BJ (cell line): ENCODE measurements at regions of chr3 and their contacts with region 1.

Region 1: GRCh38 chr3:48151058-48151806 is 37.0 kb downstream of the CDC25A start:
- DNase-seq: no peak
- H3K4me3 ChIP-seq: no peak overlapping the region
- H3K27me3 ChIP-seq: no peaks in the 10 kb centered on the region
- CTCF ChIP-seq: peak; percentile 85

Region 2: GRCh38 chr3:47836986-47837385 is 314.2 kb before region 1 on chr3:
- CTCF ChIA-PET with region 1: interaction called, 35 read pairs
- POLR2A ChIA-PET with region 1: no interaction called
- DNase-seq: no peak
- H3K4me3 ChIP-seq: no peak overlapping the region
- H3K27me3 ChIP-seq: no peaks in the 10 kb centered on the region
- CTCF ChIP-seq: no peak

Region 3: DNA sequence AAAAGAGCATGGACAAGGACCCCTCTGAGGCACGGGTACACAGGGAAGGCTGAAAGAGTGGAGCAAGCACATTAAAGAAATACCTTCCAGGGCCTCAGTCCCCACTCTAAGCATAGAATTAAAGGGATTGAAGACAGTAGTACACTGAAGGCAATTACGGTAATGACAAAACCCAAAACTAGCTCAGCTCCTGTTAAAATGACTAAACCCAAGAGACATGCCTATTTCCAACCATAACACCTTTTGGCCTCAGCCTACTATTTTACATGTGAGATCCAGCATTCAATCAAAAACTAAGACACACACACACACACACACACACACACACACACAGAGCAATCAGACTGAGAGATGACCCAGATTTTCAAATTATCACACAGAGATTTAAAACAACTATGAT is 154.8 kb before region 1 on chr3:
- CTCF ChIA-PET with region 1: interaction called, 13 read pairs
- POLR2A ChIA-PET with region 1: no interaction called
- DNase-seq: no peak
- H3K4me3 ChIP-seq: no peak overlapping the region
- H3K27me3 ChIP-seq: no peaks in the 10 kb centered on the region
- CTCF ChIP-seq: no peak

Region 4: DNA sequence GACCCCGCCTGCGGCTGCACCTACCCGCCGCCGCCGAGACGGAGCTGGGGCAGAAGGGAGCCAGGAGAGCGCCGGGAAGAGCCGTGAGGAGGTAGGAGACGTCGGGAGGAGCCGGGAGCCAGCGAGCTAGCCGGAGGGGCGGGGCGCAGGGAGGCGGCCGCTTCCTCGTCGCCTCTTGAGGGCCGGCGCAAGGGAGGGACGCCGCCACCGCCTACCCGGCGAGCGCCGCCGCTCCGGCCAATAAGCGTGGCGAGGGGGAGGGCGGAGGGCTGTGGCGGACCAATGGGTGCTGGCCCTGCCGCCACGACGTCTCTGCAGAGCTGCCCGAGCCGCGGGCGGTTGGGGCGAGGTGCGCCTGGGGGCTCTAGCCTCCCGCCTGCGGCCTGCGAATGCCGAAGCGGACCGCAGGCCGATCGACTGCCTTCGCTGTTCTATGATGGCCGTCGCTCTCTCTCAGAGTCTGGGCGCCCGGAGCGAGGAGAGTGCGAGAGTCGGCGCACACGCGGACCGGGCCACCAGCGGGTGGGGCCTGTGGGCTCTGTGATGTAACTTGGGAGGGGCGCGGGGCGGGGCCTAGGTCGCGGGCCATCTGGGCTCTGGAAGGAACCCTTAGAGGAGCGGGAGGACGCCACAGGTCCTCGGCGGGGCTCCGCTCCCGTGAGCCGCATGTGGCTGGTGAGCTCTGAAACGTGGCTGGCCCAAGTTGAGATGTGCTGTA is 62.3 kb before region 1 on chr3:
- CTCF ChIA-PET with region 1: interaction called, 16 read pairs
- POLR2A ChIA-PET with region 1: no interaction called
- DNase-seq: peak; percentile 86
- H3K4me3 ChIP-seq: peak overlapping the region; percentile 83
- H3K27me3 ChIP-seq: no peaks in the 10 kb centered on the region
- CTCF ChIP-seq: no peak

Region 5: DNA sequence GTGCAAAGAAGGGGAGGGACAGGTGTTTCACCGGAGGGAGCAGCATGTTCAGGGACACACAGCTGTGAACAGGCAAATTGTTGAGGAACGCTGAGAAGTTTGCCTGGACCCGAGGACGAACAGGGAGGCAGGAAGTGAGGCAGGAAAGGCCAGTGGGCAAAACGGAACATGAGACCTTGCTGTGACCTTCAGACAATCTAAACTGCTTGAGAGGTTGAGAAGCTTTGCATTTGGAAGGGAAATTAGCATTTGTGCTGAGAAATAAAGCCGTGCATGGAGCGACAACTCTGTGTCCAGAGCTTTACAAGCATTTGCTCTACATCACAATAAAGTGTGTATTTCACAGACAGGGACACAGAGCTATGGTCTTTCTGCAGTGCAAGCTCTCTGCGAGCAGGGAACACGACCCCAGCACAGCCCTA is 10.9 kb before region 1 on chr3:
- CTCF ChIA-PET with region 1: interaction called, 29 read pairs
- POLR2A ChIA-PET with region 1: no interaction called
- DNase-seq: no peak
- H3K4me3 ChIP-seq: no peak overlapping the region
- H3K27me3 ChIP-seq: 0 out of 2 replicates have a peak, but pooled peaks cover 1% of the 10 kb centered on the region
- CTCF ChIP-seq: no peak

Region 6: DNA sequence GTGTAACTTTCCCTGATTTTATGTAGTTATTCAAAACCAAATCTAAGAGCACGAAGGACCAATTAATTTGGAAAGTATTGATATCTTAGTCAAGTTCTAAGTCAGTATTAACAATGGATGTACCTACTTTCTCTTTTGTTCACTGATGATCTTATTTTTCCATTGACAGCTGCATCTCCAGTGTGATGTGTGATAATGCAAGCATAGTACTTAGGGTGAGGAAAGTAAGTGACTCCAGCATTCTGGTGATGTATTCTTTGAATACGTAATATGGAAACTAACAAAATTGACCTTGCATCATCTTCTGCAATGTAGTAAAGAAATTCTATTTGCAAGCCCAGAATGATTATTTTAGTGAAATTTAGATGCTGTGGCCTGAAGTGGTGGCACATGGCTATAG is 243.2 kb after region 1 on chr3:
- CTCF ChIA-PET with region 1: no interaction called
- POLR2A ChIA-PET with region 1: no interaction called
- DNase-seq: no peak
- H3K4me3 ChIP-seq: no peak overlapping the region
- H3K27me3 ChIP-seq: peaks cover 6% of the 10 kb centered on the region; the same call in 1 of the 2 replicates
- CTCF ChIP-seq: no peak